Posterior cingulate gyrus (tissue), 11 donors: ENCODE measurements at regions of chr9 and their contacts with region 1.

Region 1: GRCh38 chr9:72364679-72365524 is at the start of gene ZFAND5:
- DNase-seq: peak; percentile 94 to 100 (median 98)

Region 2: DNA sequence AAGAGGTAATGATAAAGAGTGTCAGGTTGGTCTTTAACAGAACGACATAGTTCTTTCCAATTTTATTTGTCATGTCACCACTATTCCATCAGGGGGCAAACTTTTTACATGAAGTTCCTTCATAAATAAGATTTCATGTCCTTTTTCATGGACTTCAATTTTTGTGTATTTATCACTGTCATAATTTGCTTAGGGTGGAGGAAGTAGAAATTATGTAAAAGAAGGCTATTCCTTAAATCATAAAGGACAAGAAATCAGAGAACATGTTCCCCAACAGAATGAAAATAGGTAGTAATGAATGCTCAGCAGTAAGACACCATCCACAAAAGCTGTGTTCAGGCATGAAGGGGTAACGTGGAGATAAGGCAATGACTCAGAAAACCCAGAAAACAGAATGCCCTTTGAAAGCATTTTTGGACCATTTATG is 72.6 kb before region 1 on chr9:
- intact Hi-C with region 1: loop called (anchors 5 kb)
- DNase-seq: no peak

Region 3: DNA sequence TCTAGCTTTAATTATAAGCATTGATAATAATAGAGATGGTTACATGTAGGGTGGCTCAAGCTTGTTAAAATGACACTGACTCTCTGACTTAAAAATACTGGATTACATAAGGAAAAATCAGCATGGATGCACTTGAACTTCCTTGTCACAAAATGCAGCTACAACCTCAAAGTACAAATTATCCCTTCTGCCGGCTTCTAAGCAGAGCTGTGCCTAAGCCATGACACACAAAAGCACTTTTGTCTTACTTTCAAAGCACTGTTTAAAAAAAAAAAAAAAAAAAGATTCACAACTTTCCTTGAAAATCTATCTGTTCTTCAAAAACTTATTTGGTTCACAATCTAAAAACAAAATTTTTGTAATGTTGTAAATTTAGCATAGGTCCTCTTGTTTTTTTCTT is 36.5 kb after region 1 on chr9:
- intact Hi-C with region 1: no loop called
- DNase-seq: no peak

Region 4: GRCh38 chr9:72485821-72486593 is 121.1 kb after region 1 on chr9:
- intact Hi-C with region 1: loop called (anchors 10 kb)
- DNase-seq: no peak

Region 5: GRCh38 chr9:72577212-72577753 is 212.4 kb after region 1 on chr9:
- intact Hi-C with region 1: no loop called
- DNase-seq: no peak

Region 6: DNA sequence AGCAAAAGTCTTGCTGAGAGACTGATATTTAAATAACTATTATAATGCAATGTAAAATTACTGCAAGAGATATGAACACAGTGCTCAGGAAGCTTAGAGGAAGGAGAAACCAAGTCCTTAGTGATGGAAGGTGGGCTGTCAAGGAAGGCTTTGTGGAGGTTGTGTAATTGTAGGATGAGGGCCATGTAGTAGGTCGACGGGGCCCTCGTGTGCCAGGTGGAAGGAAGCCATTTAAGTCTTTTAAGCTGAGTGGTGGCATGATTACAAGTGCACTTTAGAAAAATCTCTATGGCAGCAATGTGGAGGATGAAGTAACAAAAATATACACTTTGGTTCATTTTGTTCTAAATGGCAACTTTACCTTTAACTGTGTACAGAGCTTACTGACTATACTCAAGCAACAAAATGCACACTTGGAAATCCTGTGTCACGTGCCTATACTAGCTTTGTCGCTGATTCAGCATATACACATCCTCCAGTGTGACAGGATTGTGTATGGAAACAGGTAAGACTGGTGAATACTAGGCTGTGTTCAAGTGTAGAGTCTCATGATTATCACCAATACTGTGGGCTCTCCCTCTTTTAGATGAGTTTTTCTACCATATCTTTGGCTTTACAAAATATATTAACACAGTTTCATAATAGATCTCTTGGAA is 235.1 kb after region 1 on chr9:
- intact Hi-C with region 1: no loop called
- DNase-seq: no peak